ENCODE measurements at regions of chr15 and their contacts with region 1.

Region 1: DNA sequence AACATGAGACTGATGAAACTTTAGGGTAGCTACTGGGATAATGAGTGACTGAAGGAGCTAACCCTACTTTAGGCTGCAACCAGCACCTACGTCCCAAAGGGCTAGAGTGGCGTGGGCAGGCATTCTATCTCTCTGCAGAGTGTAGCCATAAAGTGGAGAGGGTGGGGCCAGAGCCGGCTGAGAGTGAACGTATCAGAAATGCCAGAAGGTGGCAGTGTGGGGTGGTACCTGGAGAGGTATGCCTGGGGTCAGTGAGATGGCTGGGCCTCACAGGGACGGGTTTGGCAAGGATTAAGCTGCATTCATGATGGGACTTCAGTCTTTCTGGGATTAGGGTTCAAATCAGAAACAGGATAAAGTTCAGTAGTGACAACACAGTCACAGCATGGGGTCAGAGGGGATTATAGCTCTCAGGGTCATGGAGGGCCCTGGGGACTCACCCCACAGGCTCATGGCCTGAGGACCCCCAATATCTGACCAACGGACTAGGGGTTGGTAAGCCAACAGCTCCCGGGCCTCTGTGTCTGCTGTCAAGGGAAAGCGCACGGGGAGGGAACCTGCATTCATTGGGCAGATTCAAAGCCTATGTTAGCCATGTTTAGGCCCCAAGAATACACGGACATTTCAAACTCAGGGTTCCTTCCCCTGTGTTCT is 86.5 kb upstream of the FOXB1 start:
- DNase-seq: peak; percentile 48 to 78
- H3K4me3 ChIP-seq: no peak overlapping the region
- H3K27ac ChIP-seq: no peak overlapping the region
- H3K4me1 ChIP-seq: peaks cover 19% of the 10 kb centered on the region
- H3K27me3 ChIP-seq: no peaks in the 10 kb centered on the region
- CTCF ChIP-seq: peak; percentile 65

Region 2: GRCh38 chr15:59725172-59725486 is 192.5 kb before region 1 on chr15:
- CTCF ChIA-PET with region 1: no interaction called
- POLR2A ChIA-PET with region 1: no interaction called
- intact Hi-C with region 1: loop called (anchors 10 kb)
- DNase-seq: no peak
- H3K4me3 ChIP-seq: no peak overlapping the region
- H3K27ac ChIP-seq: no peak overlapping the region
- H3K4me1 ChIP-seq: no peaks in the 10 kb centered on the region
- H3K27me3 ChIP-seq: no peaks in the 10 kb centered on the region
- CTCF ChIP-seq: no peak

Region 3: GRCh38 chr15:60006203-60006862 is 88.7 kb after region 1 on chr15:
- CTCF ChIA-PET with region 1: interaction called, 6 read pairs
- POLR2A ChIA-PET with region 1: no interaction called
- intact Hi-C with region 1: loop called (anchors 2 kb)
- DNase-seq: peak; percentile 88 to 91
- H3K4me3 ChIP-seq: peak overlapping the region; percentile 82
- H3K27ac ChIP-seq: peak overlapping the region; percentile 95
- H3K4me1 ChIP-seq: peaks cover 28% of the 10 kb centered on the region
- H3K27me3 ChIP-seq: no peaks in the 10 kb centered on the region
- CTCF ChIP-seq: no peak

Region 4: GRCh38 chr15:60017538-60018520 is 100.2 kb after region 1 on chr15:
- CTCF ChIA-PET with region 1: no interaction called
- POLR2A ChIA-PET with region 1: no interaction called
- intact Hi-C with region 1: no loop called
- DNase-seq: peak in 1 of 2 experiments; percentile 90
- H3K4me3 ChIP-seq: no peak overlapping the region
- H3K27ac ChIP-seq: peak overlapping the region; percentile 90
- H3K4me1 ChIP-seq: peaks cover 40% of the 10 kb centered on the region
- H3K27me3 ChIP-seq: no peaks in the 10 kb centered on the region
- CTCF ChIP-seq: no peak

Region 5: DNA sequence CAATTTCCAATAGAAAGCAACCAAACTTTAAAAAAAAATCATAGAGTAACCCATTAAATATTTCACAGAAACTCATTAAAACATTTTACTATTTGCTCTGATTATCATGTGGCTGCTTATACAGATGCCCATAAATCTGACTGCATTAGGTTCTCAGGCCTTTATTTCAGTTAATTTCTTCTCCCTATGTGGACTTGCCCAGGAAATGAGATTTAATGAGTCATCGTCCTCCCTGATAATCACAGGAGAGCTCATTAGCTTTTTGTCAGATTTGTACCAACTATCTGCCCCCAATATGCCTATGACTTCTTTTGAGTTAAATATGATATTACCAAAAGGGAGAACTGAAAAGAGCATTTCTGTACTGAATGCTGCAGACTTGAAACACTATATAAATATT is 254.5 kb after region 1 on chr15:
- CTCF ChIA-PET with region 1: interaction called, 11 read pairs
- POLR2A ChIA-PET with region 1: no interaction called
- intact Hi-C with region 1: no loop called
- DNase-seq: no peak
- H3K4me3 ChIP-seq: no peak overlapping the region
- H3K27ac ChIP-seq: no peak overlapping the region
- H3K4me1 ChIP-seq: no peaks in the 10 kb centered on the region; the same call in 1 of the 2 replicates
- H3K27me3 ChIP-seq: no peaks in the 10 kb centered on the region
- CTCF ChIP-seq: no peak

Region 6: DNA sequence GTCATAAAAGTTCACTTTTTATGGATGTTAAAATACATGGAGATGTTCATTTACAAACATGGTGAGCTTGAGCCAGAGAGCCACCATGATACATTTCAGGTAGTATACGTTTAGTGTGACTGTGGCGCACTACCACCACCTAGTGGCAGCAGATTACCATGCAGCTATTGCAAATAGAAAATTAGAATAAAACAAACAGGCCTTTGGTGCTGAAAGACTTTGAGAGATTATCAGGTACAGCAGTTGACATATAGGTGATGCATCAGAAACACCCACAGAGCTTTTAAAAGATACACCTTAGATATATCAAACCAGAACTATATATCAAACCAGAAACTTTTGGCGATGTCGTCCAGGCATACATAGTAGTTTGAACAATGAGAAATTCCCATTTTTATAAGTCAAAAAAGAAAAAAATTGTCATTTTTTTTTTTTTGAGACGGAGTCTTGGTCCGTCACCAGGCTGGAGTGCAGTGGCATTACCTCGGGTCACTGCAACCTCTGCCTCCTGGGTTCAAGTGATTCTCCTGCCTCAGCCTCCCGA is 603.3 kb after region 1 on chr15:
- CTCF ChIA-PET with region 1: no interaction called
- POLR2A ChIA-PET with region 1: no interaction called
- intact Hi-C with region 1: loop called (anchors 5 kb)
- DNase-seq: peak; percentile 36 to 68
- H3K4me3 ChIP-seq: no peak overlapping the region
- H3K27ac ChIP-seq: peak overlapping the region; percentile 92
- H3K4me1 ChIP-seq: peaks cover 33% of the 10 kb centered on the region
- H3K27me3 ChIP-seq: no peaks in the 10 kb centered on the region
- CTCF ChIP-seq: peak; percentile 88